AG04449 (cell line): ENCODE measurements at regions of chr11 and their contacts with region 1.

Region 1: GRCh38 chr11:61899146-61899841 is 7.9 kb upstream of the FADS3 start:
- DNase-seq: no peak
- H3K4me3 ChIP-seq: no peak overlapping the region
- CTCF ChIP-seq: peak; percentile 99

Region 2: GRCh38 chr11:61769169-61769920 is 129.9 kb before region 1 on chr11:
- CTCF ChIA-PET with region 1: no interaction called
- POLR2A ChIA-PET with region 1: no interaction called
- DNase-seq: no peak
- H3K4me3 ChIP-seq: no peak overlapping the region
- CTCF ChIP-seq: peak; percentile 48

Region 3: GRCh38 chr11:61803889-61804647 is 95.2 kb before region 1 on chr11:
- CTCF ChIA-PET with region 1: interaction called, 11 read pairs
- POLR2A ChIA-PET with region 1: no interaction called
- DNase-seq: no peak
- H3K4me3 ChIP-seq: no peak overlapping the region
- CTCF ChIP-seq: no peak

Region 4: DNA sequence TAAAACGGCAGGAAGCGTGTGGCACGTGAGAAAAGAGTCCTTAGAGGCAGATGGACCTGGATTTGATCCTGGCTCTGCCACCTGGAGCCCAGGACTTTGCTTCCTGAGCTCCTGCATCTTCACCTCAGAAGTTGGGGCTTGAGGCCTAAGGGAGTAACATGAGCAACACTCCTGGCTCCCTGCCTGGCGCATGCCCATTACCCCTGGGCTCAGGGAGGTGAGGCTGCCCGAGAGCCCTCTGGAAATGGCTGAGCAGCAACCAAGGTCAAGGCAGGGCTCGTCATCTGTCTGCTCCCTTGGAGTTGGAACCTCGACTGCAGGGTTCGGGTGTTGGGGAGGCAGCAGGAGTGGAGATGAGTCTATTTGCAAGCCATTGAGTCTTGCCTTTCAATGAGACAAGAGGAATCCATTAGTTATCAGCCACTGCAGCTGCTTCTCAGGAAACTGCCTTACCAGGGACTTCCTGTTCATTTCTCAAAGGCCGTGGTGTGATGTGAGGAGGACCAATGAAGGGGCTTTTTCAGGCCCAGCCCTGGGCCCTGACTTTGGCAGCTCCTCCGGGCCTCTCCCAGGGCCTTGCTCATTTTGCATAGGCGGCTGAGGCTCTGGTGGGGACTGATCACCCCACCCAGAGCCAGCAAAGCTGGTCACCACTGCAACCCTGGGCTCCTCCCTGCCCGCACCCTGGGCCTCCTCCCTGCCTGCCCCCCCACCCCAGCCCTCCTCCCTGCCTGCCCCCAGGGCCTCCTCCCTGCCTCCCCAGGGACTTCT is 64.8 kb before region 1 on chr11:
- CTCF ChIA-PET with region 1: interaction called, 12 read pairs
- POLR2A ChIA-PET with region 1: no interaction called
- DNase-seq: no peak
- H3K4me3 ChIP-seq: no peak overlapping the region
- CTCF ChIP-seq: no peak

Region 5: DNA sequence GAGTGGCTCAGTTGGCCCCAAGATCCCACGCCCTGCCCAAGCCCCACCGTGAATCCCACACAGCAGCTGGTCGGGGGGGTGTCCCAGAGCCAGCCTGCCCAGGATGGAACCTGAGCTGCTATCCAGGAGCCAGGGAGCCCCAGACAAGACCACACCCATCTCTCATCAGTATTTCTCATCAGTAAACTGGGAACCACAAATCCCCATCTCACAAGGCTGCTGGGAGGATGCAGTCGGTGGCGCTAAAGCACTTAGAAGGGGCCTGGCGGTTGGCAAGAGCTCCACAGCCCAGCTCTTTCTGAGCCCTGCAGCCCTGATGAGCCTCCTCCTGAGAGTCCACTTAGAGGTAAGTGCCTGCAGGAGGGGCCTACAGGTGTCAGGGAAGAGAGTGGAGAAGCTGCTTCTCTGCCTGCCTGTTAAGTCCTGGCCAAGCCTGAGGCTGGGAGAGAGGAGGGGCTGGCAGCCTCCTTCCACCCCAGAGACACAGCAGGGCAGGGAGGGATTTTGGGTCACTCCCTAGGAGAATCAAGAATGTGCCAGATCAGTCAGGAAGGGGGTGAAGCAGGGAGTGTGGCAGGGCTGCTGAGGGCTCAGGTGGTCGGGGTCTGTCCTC is 14.0 kb before region 1 on chr11:
- CTCF ChIA-PET with region 1: interaction called, 113 read pairs
- POLR2A ChIA-PET with region 1: no interaction called
- DNase-seq: no peak
- H3K4me3 ChIP-seq: no peak overlapping the region
- CTCF ChIP-seq: no peak

Region 6: GRCh38 chr11:61923166-61924063 is 24.1 kb after region 1 on chr11:
- CTCF ChIA-PET with region 1: interaction called, 169 read pairs
- POLR2A ChIA-PET with region 1: interaction called, 3 read pairs
- DNase-seq: no peak
- H3K4me3 ChIP-seq: no peak overlapping the region
- CTCF ChIP-seq: no peak

Region 7: GRCh38 chr11:61947486-61948210 is 48.4 kb after region 1 on chr11:
- CTCF ChIA-PET with region 1: interaction called, 568 read pairs
- POLR2A ChIA-PET with region 1: interaction called, 4 read pairs
- DNase-seq: no peak
- H3K4me3 ChIP-seq: no peak overlapping the region
- CTCF ChIP-seq: peak; percentile 94

Region 8: GRCh38 chr11:62069986-62070919 is 171.0 kb after region 1 on chr11:
- CTCF ChIA-PET with region 1: interaction called, 28 read pairs
- POLR2A ChIA-PET with region 1: no interaction called
- DNase-seq: no peak
- H3K4me3 ChIP-seq: no peak overlapping the region
- CTCF ChIP-seq: no peak

Region 9: GRCh38 chr11:62280452-62280851 is 381.2 kb after region 1 on chr11:
- CTCF ChIA-PET with region 1: no interaction called
- POLR2A ChIA-PET with region 1: no interaction called
- DNase-seq: no peak
- H3K4me3 ChIP-seq: no peak overlapping the region
- CTCF ChIP-seq: no peak